ENCODE measurements at regions of chr20 and their contacts with region 1.

Region 1: DNA sequence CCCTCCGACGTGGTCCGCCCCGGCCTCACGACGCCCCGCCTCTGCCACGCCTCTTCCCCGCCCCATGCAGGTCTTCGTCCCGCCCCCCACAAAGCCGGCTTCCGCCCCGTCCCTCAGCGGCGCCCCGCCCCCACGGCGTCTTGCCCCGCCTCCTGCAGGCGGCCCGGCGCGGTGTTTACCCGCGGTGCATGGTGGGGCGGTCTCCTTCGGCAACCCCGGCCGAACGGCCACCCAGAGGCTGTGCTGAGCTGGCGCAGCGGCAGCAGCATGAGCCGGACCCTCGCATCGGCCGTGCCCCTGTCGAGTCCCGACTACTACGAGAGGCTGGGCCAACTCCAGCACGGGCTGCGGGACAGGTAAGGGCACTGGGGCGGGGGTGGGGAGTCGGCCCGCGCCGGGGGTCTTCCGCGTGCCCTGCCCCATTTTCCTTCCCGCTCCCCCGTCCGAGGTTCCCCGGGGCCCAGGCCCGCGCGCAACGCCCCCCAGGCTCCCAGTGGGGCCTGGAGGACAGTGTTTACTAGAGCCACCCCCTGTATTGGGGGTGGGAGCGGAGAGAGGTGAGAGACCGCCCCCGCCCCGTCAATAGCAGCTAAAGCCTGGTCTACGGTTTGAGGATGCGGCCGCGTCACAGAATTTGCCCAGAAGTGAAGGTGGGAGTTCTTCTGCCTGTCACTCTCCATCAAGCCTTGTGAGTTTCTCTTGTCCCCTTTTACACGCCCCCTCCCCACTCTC is at the start of gene KIZ:
- DNase-seq: peak; percentile 95 to 99
- ATAC-seq: peak; percentile 99 to 100 (median 100)
- H3K4me3 ChIP-seq: peak within 1 kb of the TSS; percentile 67 to 98 (median 96)
- H3K27ac ChIP-seq: peak within 1 kb of the TSS; percentile 62 to 89 (median 81)
- H3K4me1 ChIP-seq: peaks cover 0 to 19% (median 11%) of the 10 kb centered on the region in 9 donors
- H3K27me3 ChIP-seq: no peaks in the 10 kb centered on the region
- CTCF ChIP-seq: peak in 7 of 9 donors; percentile 17 to 58 (median 53)
- total RNA-seq, gene KIZ: 16.8 to 38.2 (median 26.5) TPM

Region 2: DNA sequence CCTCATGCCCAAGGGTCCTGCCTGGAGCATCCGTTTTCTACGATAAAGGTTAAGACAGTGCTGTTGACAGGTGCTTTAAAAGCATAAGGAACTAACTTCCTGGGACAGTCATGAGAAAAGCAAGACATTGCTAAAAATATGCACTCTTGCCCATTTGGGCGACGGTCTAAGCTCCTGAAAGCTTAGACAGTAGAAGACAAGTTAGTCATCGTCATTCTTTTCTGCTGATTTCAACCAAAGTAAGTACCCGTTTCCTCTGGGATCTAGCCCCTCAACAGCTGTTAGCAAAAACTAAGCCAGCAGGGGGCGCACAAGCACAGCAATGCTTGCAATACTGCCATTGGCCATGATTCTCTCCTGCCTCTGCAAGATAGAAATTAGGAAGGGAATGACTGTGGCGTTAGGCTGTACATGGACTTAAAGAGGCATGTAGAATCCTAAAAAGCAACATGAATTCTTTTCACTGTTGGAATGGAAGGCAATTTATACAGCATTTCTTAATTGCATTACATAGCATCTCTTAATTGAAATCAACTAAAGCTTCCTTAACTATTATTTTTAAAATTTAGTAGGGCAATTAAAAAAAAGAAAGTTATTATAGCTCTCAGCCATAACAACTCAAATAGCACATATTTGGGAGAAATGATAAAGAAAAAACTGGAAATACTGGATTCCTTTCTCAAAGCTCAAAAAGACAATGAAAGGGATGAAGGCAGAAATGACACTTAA is 265.8 kb before region 1 on chr20:
- intact Hi-C with region 1: loop called in 2 of 10 experiments (anchors 10 kb)
- DNase-seq: peak; percentile 84 to 89
- ATAC-seq: peak; percentile 64 to 93 (median 80)
- H3K4me3 ChIP-seq: no peak overlapping the region
- H3K27ac ChIP-seq: no peak overlapping the region
- H3K4me1 ChIP-seq: peaks cover 0 to 2% (median 0%) of the 10 kb centered on the region in 9 donors
- H3K27me3 ChIP-seq: peaks cover 0 to 44% (median 31%) of the 10 kb centered on the region in 7 donors
- CTCF ChIP-seq: peak; percentile 74 to 96 (median 94)

Region 3: DNA sequence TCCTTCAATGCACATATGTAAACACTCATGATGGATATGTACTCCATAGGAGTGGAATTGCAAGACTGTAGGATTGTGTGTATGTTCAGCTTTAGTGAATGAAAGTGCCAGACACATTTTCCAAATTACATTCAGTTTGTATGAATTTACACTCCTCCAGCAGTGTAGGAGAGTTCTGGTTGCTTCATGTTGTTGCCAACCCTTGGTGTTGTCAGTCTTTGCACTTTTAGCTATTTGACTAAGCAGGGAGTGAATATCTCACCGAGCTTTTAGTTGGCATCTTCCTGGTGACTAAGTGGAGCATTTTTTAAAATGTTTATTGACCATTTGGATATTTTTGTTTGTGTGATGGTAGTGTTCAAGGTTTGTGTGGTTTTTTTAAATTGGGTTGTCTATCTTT is 247.4 kb after region 1 on chr20:
- intact Hi-C with region 1: loop called in 1 of 10 experiments (anchors 10 kb)
- DNase-seq: no peak
- ATAC-seq: no peak
- H3K4me3 ChIP-seq: no peak overlapping the region
- H3K27ac ChIP-seq: no peak overlapping the region
- H3K4me1 ChIP-seq: peaks cover 0 to 7% (median 0%) of the 10 kb centered on the region in 9 donors
- H3K27me3 ChIP-seq: no peaks in the 10 kb centered on the region
- CTCF ChIP-seq: no peak

Measured in heart right ventricle (tissue), 16 donors.